Common myeloid progenitor, CD34-positive (primary cell): ENCODE measurements at regions of chr6 and their contacts with region 1.

Region 1: DNA sequence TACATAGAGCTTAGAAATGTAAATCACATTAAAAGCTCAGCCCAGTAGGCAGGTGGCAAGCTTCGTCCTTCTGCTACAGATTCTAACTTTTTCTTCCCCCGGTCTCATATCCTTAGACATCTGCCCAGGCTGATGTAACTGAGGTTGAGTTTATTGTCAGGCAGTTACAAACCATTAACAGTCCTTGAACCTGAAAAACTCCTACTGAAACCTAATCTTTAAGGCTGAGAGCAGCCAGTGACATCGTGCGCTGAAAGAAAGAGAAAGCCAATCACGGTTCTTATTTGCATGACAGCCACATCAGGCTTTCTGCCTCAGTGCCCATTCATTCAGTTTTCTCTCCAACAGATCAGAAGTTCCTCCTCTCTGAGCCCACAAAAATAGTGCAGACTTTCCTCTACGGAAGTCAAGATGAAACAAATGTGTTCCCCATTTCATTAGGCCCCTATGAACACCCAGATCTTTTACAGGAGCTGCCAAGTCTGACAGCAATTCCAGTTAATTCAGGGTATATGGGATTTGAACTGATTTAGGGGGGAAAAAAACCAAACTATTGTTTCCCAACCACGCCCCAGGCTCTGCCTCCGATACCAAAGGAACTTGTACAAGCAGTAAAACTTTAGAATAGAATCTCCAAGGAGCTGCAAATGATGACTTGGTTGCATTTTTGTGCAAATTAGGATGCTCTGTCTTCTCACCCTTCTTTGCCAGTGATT is at the start of gene NHSL1:
- DNase-seq: peak; percentile 22 to 75 (median 65)
- H3K4me3 ChIP-seq: peak within 1 kb of the TSS in 4 of 7 experiments; percentile 5 to 69 (median 38)
- H3K27ac ChIP-seq: no peak within 1 kb of the TSS
- H3K4me1 ChIP-seq: peaks cover 11 to 40% (median 20%) of the 10 kb centered on the region in 4 experiments
- H3K27me3 ChIP-seq: no peaks in the 10 kb centered on the region

Region 2: DNA sequence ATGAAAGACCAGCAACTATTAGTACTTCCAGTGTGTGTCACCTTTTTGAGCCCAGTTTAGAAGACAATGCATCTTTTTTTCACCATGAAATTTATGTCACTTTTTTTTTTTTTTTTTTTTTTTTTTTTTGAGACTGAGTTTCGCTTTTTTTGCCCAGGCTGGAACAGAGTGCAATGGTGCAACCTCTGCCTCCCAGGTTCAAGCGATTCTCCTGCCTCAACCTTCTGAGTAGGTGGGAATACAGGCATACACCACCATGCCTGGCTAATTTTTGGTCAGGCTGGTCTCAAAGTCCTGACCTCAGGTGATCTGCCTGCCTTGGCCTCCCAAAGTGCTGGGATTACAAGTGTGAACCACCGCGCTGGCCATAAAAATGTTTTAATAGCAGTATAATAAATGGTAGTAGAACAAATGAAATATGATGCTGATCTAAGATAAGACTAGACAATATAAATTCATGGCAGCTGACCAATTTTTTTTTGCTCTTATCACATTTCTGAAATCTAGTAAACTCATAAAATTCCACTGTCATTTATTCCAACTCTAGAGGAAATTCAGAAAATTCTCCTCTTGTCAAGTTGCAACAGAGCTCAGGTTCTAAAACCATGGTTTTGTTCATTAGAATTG is 21.4 kb before region 1 on chr6:
- CTCF ChIA-PET with region 1: no interaction called
- POLR2A ChIA-PET with region 1: no interaction called
- DNase-seq: no peak
- H3K4me3 ChIP-seq: no peak overlapping the region
- H3K27ac ChIP-seq: no peak overlapping the region
- H3K4me1 ChIP-seq: no peaks in the 10 kb centered on the region
- H3K27me3 ChIP-seq: no peaks in the 10 kb centered on the region

Region 3: GRCh38 chr6:138517635-138518034 is 18.2 kb after region 1 on chr6:
- CTCF ChIA-PET with region 1: interaction called, 10 read pairs
- POLR2A ChIA-PET with region 1: no interaction called
- DNase-seq: peak; percentile 34 to 53 (median 45)
- H3K4me3 ChIP-seq: no peak overlapping the region
- H3K27ac ChIP-seq: no peak overlapping the region
- H3K4me1 ChIP-seq: peaks cover 7 to 26% (median 17%) of the 10 kb centered on the region in 4 experiments
- H3K27me3 ChIP-seq: no peaks in the 10 kb centered on the region